Common myeloid progenitor, CD34-positive (primary cell): ENCODE measurements at regions of chr5 and their contacts with region 1.

Region 1: DNA sequence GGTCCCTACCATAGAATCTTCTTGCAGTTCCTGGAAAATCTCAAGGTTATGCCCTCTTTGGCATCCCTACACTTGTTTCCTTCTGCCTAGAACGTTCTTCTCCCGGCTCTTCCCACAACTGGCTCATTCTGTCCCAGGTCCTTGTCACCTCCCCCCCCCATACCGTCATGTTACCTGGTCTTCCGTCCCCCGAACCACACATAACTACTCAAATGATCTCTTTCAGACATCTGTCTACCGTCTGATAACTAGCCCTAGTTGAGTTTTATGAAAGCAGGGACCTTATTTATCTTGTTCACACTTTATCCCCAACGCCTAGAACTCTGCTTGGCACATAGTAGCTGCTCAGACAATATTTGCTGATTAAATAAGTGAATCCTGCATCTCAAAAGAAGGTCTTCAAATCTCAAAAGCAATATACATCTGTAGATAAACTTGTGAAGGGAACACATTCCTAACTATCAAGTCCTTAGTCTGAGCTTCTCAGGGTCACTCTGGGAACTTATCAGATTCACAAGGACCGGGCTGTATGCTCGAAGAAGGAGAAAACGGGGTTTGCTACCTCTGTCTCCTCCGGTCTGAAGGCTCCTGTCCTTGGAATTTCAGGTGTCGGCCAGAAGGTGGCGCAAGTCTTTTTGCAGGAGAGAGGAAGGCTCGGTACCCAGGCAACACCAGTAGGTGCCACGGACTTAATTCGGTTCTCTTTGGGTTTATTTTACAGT is 30.0 kb downstream of the LCP2 start:
- DNase-seq: peak; percentile 80 to 90 (median 90)
- H3K4me3 ChIP-seq: no peak overlapping the region
- H3K27ac ChIP-seq: peak overlapping the region; percentile 4 to 49
- H3K4me1 ChIP-seq: peaks cover 17 to 63% (median 39%) of the 10 kb centered on the region in 4 experiments
- H3K27me3 ChIP-seq: no peaks in the 10 kb centered on the region

Region 2: GRCh38 chr5:170302653-170303501 is 35.3 kb after region 1 on chr5:
- CTCF ChIA-PET with region 1: interaction called, 430 read pairs
- POLR2A ChIA-PET with region 1: no interaction called
- DNase-seq: peak; percentile 72 to 90 (median 88)
- H3K4me3 ChIP-seq: peak overlapping the region in 3 of 7 experiments; percentile 20 to 45 (median 29)
- H3K27ac ChIP-seq: peak overlapping the region in 1 of 2 experiments; percentile 40
- H3K4me1 ChIP-seq: peaks cover 21 to 65% (median 48%) of the 10 kb centered on the region in 4 experiments
- H3K27me3 ChIP-seq: no peaks in the 10 kb centered on the region

Region 3: DNA sequence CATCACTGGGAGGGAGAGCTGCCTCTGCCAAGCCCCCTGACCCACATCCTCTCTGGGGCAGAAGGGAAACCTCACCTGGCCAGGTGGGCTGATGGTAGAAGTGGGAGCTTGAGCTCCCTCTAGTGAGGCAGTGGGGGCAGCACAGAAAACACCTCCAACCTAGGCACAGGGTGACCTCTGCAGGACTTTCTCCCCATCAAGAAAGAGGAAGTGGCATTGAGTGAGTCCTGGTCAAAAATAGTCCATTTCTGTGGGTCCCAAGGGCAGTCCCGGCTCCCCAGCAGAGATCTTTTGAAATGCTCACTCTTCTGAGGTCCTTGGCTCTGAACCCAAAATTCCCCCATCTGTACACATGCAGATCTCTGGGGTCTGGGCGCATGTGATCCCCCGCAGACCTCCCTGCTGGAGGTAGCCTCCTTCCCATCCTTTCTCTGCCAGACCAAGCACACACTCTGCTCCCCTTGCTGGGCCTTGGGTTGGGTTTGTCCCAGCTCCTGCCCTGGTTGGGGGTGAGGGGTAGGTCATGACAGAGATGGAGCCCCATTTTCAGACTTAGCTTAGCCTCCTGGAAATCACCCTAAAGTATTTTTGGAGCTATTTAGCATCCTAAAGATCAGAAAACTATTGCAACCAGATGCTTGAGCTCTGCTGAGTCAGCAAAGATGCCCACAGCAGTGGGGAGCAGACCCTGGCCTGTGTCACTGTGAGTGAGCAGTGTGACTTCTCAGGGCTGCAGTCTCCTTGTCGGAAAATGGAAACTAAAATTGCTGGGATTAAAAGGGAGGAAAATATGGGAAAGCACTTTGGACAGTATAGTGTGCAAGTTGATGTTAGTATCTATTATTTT is 71.6 kb after region 1 on chr5:
- CTCF ChIA-PET with region 1: interaction called, 65 read pairs
- POLR2A ChIA-PET with region 1: no interaction called
- DNase-seq: peak in 2 of 3 donors; percentile 35 to 36
- H3K4me3 ChIP-seq: no peak overlapping the region
- H3K27ac ChIP-seq: no peak overlapping the region
- H3K4me1 ChIP-seq: peaks cover 7 to 47% (median 29%) of the 10 kb centered on the region in 4 experiments
- H3K27me3 ChIP-seq: no peaks in the 10 kb centered on the region

Region 4: DNA sequence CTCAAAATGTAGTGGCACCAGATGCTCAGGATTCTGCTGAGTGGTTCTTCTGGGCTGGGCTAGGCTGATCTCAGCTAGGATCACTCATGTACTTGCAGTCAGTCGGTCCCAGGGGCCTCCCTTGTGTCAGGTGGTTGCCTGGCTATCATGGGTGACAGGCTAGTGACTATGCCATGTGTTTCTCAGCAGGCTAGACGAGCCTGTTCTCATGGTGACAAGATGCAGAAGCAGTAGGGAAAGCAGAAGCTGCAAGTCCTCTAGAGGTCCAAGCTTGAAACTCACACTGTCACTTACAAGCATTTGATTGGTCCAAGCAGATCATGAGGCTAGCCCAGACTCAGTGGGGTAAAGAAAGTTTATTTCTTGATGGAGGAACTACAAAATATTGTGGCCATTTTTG is 136.8 kb after region 1 on chr5:
- CTCF ChIA-PET with region 1: interaction called, 49 read pairs
- POLR2A ChIA-PET with region 1: no interaction called
- DNase-seq: peak; percentile 41 to 88 (median 79)
- H3K4me3 ChIP-seq: no peak overlapping the region
- H3K27ac ChIP-seq: no peak overlapping the region
- H3K4me1 ChIP-seq: peaks cover 5 to 25% (median 20%) of the 10 kb centered on the region in 4 experiments
- H3K27me3 ChIP-seq: no peaks in the 10 kb centered on the region

Region 5: GRCh38 chr5:170427672-170428236 is 160.2 kb after region 1 on chr5:
- CTCF ChIA-PET with region 1: interaction called, 24 read pairs
- POLR2A ChIA-PET with region 1: no interaction called
- DNase-seq: peak in 2 of 3 donors; percentile 24 to 27
- H3K4me3 ChIP-seq: no peak overlapping the region
- H3K27ac ChIP-seq: no peak overlapping the region
- H3K4me1 ChIP-seq: peaks cover 0 to 34% (median 16%) of the 10 kb centered on the region in 4 experiments
- H3K27me3 ChIP-seq: no peaks in the 10 kb centered on the region